Left ventricle myocardium superior (tissue), 1 donor: ENCODE measurements at regions of chr11 and their contacts with region 1.

Region 1: DNA sequence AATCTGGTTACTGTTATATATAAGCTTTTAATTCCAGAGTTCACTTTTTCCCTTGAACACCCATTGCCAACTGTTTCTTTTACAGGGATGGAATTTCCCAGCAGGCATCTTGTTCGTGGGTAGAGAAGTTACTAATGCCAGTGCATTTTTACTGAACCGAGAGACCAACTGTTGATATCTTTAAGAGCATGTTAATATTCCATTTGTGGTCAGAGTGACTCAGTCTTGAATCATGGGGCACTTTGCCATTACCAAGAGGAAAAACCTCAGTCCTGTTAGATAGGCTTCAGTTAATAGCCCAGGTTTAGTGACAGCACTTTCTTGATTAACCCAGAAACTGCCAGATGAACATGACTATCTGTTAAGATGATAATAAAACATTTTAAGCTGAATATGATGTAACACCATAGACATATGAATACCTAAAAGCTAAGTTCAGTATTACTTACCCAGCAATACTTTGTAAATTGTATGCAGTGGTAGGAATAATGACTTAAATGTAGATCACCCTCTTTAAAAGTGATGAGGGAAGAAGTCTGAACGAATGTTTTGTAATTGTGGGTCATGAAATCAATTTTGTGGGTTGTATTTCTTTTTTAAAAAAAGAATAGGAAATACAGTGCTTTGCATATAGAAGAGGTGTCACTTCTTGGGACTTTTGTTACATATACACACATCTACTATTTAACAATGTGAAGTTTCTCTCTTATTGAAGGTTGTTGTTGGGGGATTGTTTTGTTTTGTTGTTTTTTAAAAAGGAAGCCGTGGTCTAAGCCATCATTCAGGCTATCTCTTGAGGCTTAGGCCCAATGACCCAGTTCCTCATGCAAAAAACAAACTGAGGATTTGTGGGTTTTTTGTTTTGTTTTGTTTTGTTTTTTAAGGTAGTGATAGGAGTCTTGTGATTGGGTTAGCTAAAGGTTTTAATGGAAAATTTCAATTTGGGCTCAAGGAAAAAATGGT is 79.2 kb upstream of the GRIK4 start:
- DNase-seq: no peak
- ATAC-seq: peak; percentile 95

Region 2: DNA sequence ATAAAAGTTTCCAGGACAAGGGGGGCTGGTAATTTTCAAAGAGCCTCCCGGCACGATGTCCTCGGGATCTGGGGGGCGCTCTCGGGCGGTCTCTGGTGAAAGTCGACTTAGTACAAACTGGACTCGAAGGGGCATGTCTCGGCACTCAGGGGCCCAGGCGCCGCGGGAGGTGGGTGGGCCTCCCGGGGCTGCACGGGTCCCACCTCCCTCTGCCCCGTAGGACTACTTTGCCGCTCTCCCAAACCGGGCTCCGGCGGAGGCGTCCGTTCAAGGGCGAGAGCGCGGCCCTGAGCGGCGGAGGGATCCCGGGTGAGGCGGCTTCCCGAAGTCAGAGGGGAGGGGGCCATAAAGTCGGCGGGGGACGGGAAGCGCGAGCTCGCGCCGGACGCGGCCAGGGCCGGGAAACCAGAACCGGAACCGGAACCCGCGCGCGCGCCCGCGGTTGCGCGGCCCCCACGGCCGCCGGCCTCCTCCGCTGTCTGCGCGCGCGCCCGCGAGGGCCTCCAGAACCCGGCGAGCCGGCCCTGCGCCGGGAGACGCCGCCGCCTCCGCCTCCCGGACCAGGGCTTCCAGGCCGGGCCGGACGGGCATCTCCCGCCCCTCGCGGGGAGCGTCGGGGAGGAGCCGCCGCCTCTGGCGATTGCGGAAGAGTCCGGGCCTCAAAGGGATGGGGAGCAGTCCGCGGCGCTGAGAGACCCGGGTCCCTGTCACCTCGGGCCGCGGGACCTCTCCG is 96.3 kb before region 1 on chr11 and contains the start of gene ARHGEF12:
- intact Hi-C with region 1: loop called (anchors 5 kb)
- DNase-seq: peak; percentile 98
- ATAC-seq: peak; percentile 79
- total RNA-seq, gene ARHGEF12: 92.5 TPM

Region 3: GRCh38 chr11:120383518-120384155 is 48.7 kb before region 1 on chr11:
- intact Hi-C with region 1: no loop called
- DNase-seq: no peak
- ATAC-seq: no peak

Region 4: DNA sequence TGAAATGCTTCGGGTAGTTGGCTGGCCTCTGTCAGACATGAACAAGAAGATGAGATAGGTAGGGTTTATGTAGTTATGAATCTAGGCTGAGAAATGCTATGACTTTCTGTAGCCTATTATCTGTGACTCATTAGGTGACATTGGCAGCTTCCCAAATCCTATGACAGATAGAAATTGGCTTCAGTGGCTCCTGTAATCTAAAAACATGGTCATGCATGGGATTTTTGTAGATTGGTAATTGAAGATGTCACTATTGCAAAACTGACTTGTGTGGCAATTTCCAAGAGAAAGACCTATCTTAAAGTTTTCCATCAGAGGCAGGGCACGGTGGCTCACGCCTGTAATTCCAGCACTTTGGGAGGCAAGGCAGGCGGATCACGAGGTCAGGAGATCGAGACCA is 49.8 kb after region 1 on chr11:
- intact Hi-C with region 1: loop called (anchors 10 kb)
- DNase-seq: no peak
- ATAC-seq: no peak

Region 5: GRCh38 chr11:120564573-120565311 is 132.4 kb after region 1 on chr11:
- intact Hi-C with region 1: no loop called
- DNase-seq: peak; percentile 70
- ATAC-seq: peak; percentile 77

Region 6: DNA sequence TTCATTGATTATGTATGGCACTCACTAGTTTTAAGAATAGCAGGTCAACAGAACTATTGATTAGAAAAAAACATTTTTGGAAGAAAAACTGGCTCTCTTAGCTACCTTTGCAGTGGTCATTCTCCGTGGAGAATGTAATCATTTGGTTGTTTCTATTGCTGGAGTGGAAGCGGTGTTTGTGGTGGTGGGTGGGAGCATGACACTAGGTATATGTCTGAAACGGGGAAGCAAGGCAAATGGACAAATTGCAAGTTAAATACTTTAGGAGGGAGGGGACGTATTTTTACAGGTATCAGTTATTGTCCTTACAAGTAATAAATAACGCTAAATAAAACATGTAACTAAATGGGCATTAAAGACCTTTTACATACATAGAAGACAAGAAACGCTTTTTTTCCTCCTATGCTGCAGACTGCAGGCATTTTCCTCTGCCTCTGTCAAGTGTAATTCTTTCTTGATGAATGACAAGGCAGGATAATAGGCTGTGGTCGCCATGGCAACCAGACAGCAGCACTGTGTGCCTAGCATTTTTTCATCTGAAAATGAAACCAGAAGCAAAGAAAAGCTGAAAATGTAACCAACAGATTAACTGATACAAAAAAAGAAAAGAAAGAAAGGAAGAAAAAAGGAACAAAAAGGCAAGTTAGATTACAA is 1637.5 kb after region 1 on chr11:
- intact Hi-C with region 1: no loop called
- DNase-seq: peak; percentile 59
- ATAC-seq: no peak